ENCODE measurements at regions of chr6 and their contacts with region 1.

Region 1: DNA sequence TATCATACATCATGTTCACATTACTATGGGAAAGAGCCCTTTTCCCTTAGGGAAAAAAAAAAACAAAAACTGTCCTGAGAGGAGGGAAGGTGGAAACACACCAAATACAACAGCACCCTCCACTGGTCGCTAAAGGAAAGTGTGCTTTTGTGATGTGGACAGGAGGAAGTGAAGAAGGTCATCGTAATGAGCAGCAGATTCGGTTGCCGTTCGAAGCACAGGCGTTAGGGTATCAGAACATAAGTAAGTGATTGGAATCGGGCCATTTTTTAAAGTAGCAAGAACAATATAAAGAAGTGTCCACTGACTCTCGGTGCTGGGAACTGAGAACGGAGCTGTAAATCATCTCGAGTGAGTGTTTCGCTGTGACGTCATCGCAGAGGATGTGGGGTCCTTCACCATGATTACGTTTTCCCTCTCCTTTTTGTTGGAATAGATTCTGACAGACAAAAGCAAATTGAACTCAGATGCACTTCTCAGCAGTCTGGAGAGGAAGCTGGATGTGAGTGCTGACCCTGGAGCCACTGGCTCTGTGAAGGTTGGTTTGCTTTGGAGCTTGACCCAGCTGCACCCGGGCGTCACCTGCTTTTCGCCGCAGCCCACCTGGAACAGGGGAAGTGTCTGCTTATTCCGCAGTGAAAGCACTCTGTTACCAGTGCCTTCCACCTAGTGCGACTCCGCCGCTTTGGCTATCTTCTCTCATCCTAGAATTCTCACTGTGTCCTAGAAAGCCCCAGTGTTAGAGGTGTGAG is 203.6 kb upstream of the GMDS start:
- DNase-seq: no peak
- H3K4me3 Mint-ChIP-seq: no peak overlapping the region
- H3K27ac Mint-ChIP-seq: no peak overlapping the region
- H3K4me1 Mint-ChIP-seq: peaks cover 8% of the 10 kb centered on the region
- H3K27me3 Mint-ChIP-seq: peaks cover 11% of the 10 kb centered on the region

Region 2: GRCh38 chr6:1596088-1596852 is 852.7 kb before region 1 on chr6:
- intact Hi-C with region 1: loop called (anchors 2 kb)
- DNase-seq: peak; percentile 50
- H3K4me3 Mint-ChIP-seq: no peak overlapping the region
- H3K27ac Mint-ChIP-seq: no peak overlapping the region
- H3K4me1 Mint-ChIP-seq: peaks cover 4% of the 10 kb centered on the region
- H3K27me3 Mint-ChIP-seq: peaks cover 55% of the 10 kb centered on the region

Region 3: DNA sequence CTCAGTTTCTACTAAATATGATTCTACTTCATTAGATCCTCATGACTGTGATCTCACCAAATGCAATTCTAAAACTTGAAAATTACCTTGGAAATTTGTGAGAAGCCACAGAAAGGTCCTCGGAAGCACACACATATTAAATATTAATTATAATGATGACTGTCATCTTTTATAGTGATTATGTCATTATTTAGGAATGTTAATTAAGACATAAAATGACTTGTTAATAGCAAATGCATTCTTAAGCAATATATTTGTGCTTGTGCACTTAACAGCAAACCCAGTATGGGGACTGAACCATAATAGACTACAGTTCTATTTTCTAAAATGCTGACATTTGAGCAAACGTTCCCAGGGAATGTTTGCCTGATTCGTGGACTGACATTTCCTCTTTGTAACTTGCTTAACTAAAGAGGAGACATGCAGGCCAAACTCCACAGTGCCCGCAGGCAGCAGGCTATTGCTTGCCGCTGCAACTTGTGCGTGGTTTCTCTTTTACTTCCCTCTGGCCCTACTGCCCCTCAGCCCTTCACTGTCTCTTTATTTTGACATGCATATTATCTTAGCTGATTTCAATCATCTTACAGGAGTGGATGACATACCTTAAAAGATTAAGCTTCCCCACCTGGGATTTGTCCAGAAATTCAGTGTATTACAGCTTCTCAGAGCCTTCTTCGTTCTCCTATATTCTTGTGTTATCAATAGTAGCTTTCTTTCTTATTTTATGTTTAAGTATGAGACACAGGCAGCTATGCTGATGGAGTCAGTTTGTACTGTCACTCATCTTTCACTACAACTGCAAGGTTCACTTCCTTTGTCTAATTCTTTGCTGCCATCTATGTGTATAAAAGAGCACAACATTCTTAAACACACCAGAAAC is 345.1 kb before region 1 on chr6:
- intact Hi-C with region 1: loop called (anchors 2 kb)
- DNase-seq: no peak
- H3K4me3 Mint-ChIP-seq: no peak overlapping the region
- H3K27ac Mint-ChIP-seq: no peak overlapping the region
- H3K4me1 Mint-ChIP-seq: peaks cover 6% of the 10 kb centered on the region
- H3K27me3 Mint-ChIP-seq: peaks cover 2% of the 10 kb centered on the region

Region 4: GRCh38 chr6:2209226-2209809 is 239.7 kb before region 1 on chr6:
- intact Hi-C with region 1: loop called (anchors 1 kb)
- DNase-seq: peak; percentile 11
- H3K4me3 Mint-ChIP-seq: no peak overlapping the region
- H3K27ac Mint-ChIP-seq: no peak overlapping the region
- H3K4me1 Mint-ChIP-seq: no peaks in the 10 kb centered on the region
- H3K27me3 Mint-ChIP-seq: peaks cover 2% of the 10 kb centered on the region

Region 5: GRCh38 chr6:2376429-2377355 is 72.3 kb before region 1 on chr6:
- intact Hi-C with region 1: loop called (anchors 5 kb)
- DNase-seq: no peak
- H3K4me3 Mint-ChIP-seq: no peak overlapping the region
- H3K27ac Mint-ChIP-seq: no peak overlapping the region
- H3K4me1 Mint-ChIP-seq: peaks cover 5% of the 10 kb centered on the region
- H3K27me3 Mint-ChIP-seq: no peaks in the 10 kb centered on the region

Measured in activated T-helper 1 cell treated with anti-CD3 and anti-CD28 coated beads, Interleukin-12 subunit alpha, Interleukin-12 subunit beta, Interleukin-2, Interleukin-4 antibody, amounts not matched to agents 30 ng/mL and 10 ng/mL and 1 ng/mL, durations not matched to agents 14 hours and 24 hours and 36 hours (primary cell).